K562 (cell line): ENCODE measurements at regions of chr7 and their contacts with region 1.

Region 1: DNA sequence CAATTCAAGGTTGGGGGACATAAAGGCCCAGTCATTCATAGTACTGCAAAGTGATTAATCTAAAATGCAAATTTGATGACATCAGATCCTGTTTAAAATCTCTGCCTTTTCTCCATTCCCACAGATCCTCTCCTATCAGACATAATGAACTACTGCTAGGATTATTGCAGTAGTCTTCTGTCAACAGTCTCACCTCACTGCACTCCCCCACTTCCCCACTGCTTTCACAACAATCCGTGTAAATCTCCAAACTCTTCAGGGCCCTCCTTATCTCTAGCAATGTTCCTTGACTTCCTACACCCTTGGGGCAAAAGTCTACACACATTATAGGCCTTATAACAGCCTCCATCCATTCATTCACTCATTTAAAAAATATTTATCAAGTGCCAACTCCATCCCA is 112.4 kb downstream of the KBTBD2 start:
- DNase-seq: peak in 2 of 4 experiments; percentile 19 to 42
- ATAC-seq: peak; percentile 67
- H3K4me3 ChIP-seq: no peak overlapping the region
- H3K27ac ChIP-seq: peak overlapping the region; percentile 56; the same call in 1 of the 3 replicates
- H3K4me1 ChIP-seq: peaks cover 0 to 11% of the 10 kb centered on the region in 2 experiments; a peak in 2 of 5 replicates
- H3K27me3 ChIP-seq: no peaks in the 10 kb centered on the region
- CTCF ChIP-seq: no peak
- EP300 ChIP-seq: 0 out of 2 replicates have a peak, but pooled peaks have one; percentile 25
- POLR2A ChIP-seq: no peak
- RAD21 ChIP-seq: no peak

Region 2: GRCh38 chr7:32762925-32763293 is 16.3 kb before region 1 on chr7:
- CTCF ChIA-PET with region 1: no interaction called
- POLR2A ChIA-PET with region 1: no interaction called
- in situ Hi-C with region 1: no loop called
- intact Hi-C with region 1: no loop called
- DNase-seq: no peak
- ATAC-seq: no peak
- H3K4me3 ChIP-seq: no peak overlapping the region
- H3K27ac ChIP-seq: no peak overlapping the region
- H3K4me1 ChIP-seq: peaks cover 0 to 3% of the 10 kb centered on the region in 2 experiments; a peak in 3 of 5 replicates
- H3K27me3 ChIP-seq: no peaks in the 10 kb centered on the region
- CTCF ChIP-seq: no peak
- EP300 ChIP-seq: no peak
- POLR2A ChIP-seq: no peak
- RAD21 ChIP-seq: no peak

Region 3: DNA sequence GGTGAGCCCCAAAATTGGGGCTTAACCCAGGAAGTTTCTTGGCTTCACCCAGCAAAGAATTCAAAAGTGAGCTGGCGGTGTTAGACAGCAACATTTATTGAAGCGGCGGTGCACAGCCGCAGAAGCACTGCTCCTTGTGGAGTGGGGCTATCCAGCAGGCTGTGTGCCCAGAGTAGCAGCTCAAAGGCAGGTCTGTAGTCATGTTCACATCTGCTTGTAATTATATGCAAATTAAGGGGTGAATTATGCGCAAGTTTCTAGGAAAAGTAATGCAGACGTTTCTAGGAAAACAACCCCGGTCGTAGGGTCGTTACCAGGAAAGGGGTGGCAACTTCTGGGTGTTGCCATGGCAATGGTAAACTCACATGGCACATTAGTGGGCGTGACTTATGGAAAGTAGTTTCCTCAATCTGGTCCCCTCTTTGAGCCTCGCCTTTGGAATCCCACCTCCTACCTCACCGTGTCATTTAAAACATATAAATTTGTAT is 126.1 kb after region 1 on chr7:
- CTCF ChIA-PET with region 1: no interaction called
- POLR2A ChIA-PET with region 1: no interaction called
- in situ Hi-C with region 1: no loop called
- intact Hi-C with region 1: no loop called
- DNase-seq: peak; percentile 81 to 98 (median 88)
- ATAC-seq: peak; percentile 95
- H3K4me3 ChIP-seq: peak overlapping the region; percentile 31
- H3K27ac ChIP-seq: peak overlapping the region; percentile 81
- H3K4me1 ChIP-seq: peaks cover 11 to 26% of the 10 kb centered on the region in 2 experiments
- H3K27me3 ChIP-seq: no peaks in the 10 kb centered on the region
- CTCF ChIP-seq: peak; percentile 20 to 32 (median 32); a peak in 3 of 6 replicates
- EP300 ChIP-seq: peak; percentile 61; the same call in 1 of the 2 replicates
- POLR2A ChIP-seq: peak; percentile 76
- RAD21 ChIP-seq: peak; percentile 10 to 34; a peak in 2 of 4 replicates

Region 4: DNA sequence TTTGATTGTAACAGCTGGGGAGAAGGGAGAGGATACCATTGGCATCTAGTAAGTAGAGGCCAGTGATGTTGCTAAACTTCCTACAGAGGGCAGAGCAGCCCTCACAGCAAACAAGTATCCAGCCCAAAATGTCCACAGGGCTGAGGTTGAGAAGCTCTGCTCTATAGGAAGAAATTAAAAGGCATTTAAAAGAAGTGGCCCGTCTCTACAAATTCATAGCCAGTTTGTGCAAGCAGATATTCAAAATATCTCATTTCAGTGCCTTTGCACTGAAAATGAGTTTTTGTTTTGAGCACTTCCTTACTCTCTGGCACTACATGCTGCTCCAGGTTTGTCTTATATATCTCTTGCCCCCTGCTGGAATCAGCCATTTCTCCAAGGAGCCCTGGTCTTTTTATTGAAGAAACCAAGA is 680.2 kb after region 1 on chr7:
- CTCF ChIA-PET with region 1: no interaction called
- POLR2A ChIA-PET with region 1: no interaction called
- in situ Hi-C with region 1: no loop called
- intact Hi-C with region 1: no loop called
- DNase-seq: peak in 1 of 4 experiments; percentile 4
- ATAC-seq: no peak
- H3K4me3 ChIP-seq: no peak overlapping the region
- H3K27ac ChIP-seq: no peak overlapping the region
- H3K4me1 ChIP-seq: no peaks in the 10 kb centered on the region
- H3K27me3 ChIP-seq: no peaks in the 10 kb centered on the region
- CTCF ChIP-seq: no peak
- EP300 ChIP-seq: no peak
- POLR2A ChIP-seq: no peak
- RAD21 ChIP-seq: 0 out of 4 replicates have a peak, but pooled peaks of 1 of the 2 experiments have one; percentile 2

Region 5: GRCh38 chr7:33932832-33933468 is 1153.8 kb after region 1 on chr7:
- CTCF ChIA-PET with region 1: no interaction called
- POLR2A ChIA-PET with region 1: no interaction called
- in situ Hi-C with region 1: loop called (anchors 25 kb)
- intact Hi-C with region 1: no loop called
- DNase-seq: peak; percentile 63 to 73 (median 71)
- ATAC-seq: peak; percentile 92
- H3K4me3 ChIP-seq: no peak overlapping the region
- H3K27ac ChIP-seq: no peak overlapping the region
- H3K4me1 ChIP-seq: no peaks in the 10 kb centered on the region
- H3K27me3 ChIP-seq: no peaks in the 10 kb centered on the region
- CTCF ChIP-seq: peak; percentile 78 to 93 (median 82)
- EP300 ChIP-seq: no peak
- POLR2A ChIP-seq: no peak
- RAD21 ChIP-seq: peak; percentile 63 to 69